ENCODE measurements at regions of chr6 and their contacts with region 1.

Region 1: DNA sequence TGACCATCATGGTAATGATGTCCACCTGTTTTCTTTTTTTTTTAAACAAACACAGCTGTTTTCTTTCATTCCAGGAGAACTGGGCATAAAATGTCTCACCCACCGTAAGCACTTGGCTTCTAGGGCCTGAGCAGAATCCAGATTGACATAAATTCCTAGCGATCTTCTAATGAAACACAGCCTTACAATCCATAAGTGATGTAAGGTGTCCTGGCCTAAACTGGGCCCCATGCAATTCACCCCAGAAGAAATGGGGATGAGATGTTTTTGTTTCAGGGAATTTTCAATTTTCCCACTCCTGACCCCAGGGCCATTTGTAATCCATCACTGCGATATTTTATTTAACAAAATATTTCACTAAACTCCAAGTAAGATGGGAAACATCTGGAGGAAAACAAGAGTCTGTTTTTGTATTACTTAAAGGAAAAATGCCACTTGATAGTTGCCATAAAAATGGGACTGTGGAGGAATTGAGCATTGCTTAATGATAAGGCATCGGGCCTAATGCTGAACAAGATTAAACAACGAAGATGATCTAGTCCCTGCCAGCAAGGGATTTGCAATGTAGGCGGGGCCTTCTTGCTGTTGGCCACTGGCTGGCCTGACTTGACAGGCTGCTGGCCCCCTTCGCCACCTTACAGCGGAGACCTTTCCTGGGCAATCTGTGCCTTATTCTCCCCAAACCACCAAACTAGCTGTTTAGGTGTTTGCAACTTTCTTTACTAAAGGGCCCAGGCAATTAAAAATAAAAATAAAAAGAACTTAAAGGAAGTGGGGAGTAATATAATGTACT is 183.7 kb downstream of the CD109 start:
- DNase-seq: no peak
- H3K4me3 ChIP-seq: no peak overlapping the region
- H3K27ac ChIP-seq: no peak overlapping the region
- H3K4me1 ChIP-seq: peaks cover 10% of the 10 kb centered on the region
- H3K27me3 ChIP-seq: no peaks in the 10 kb centered on the region
- CTCF ChIP-seq: no peak

Region 2: GRCh38 chr6:72636215-72636614 is 1243.5 kb before region 1 on chr6:
- CTCF ChIA-PET with region 1: no interaction called
- POLR2A ChIA-PET with region 1: no interaction called
- intact Hi-C with region 1: no loop called
- DNase-seq: no peak
- H3K4me3 ChIP-seq: no peak overlapping the region
- H3K27ac ChIP-seq: no peak overlapping the region
- H3K4me1 ChIP-seq: peaks cover 48% of the 10 kb centered on the region
- H3K27me3 ChIP-seq: no peaks in the 10 kb centered on the region
- CTCF ChIP-seq: no peak

Region 3: GRCh38 chr6:73898624-73899023 is 18.9 kb after region 1 on chr6:
- CTCF ChIA-PET with region 1: no interaction called
- POLR2A ChIA-PET with region 1: no interaction called
- intact Hi-C with region 1: loop called (anchors 1 kb)
- DNase-seq: peak; percentile 29
- H3K4me3 ChIP-seq: no peak overlapping the region
- H3K27ac ChIP-seq: no peak overlapping the region
- H3K4me1 ChIP-seq: peaks cover 8% of the 10 kb centered on the region
- H3K27me3 ChIP-seq: no peaks in the 10 kb centered on the region
- CTCF ChIP-seq: peak; percentile 44; the same call in 1 of the 2 replicates